Adrenal gland (tissue), 19 donors: ENCODE measurements at regions of chr16 and their contacts with region 1.

Region 1: GRCh38 chr16:70158261-70158939 is 15.2 kb upstream of the CLEC18C start:
- DNase-seq: peak in 2 of 7 donors; percentile 18 to 55
- H3K4me3 ChIP-seq: no peak overlapping the region
- H3K27ac ChIP-seq: no peak overlapping the region
- H3K4me1 ChIP-seq: no peaks in the 10 kb centered on the region
- H3K27me3 ChIP-seq: no peaks in the 10 kb centered on the region
- CTCF ChIP-seq: no peak
- POLR2A ChIP-seq: no peak

Region 2: DNA sequence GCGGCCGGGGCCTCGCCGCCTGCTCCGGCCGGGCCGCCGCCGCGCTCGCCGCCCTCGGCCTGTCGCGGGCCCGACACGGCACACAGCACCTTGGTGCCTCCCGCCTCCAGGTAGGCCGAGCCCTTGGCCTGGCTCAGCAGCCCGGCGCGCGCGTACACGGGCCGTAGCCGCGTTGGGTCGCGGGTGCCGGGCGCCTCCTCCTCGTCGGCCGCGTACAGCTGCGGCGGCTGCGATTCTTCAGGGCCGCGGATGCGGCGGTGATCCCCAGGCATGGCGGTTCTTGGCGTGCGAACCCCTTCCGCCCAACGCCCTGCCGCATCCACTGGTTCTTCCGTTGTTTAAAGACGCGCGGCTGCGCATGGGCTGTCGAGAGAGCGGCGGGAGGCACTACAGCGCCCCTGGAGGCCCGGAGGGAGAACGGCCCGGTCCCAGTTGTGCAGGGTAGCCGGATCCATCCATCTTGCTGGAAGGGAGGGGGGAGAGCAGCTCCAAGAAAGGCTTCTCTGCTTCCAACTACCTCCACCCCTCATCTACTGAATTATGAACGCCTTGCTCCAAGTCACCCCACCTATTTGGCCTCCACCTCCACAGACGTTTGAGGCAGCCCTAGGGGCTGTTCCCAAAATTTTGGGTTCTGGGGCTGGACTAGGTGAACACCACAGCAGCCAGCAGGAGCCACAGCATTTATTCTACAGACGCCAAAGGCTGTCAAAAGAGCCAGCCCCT is 93.4 kb after region 1 on chr16 and contains the start of gene EXOSC6:
- intact Hi-C with region 1: loop called in 1 of 2 experiments (anchors 10 kb)
- DNase-seq: peak; percentile 89 to 94 (median 92)
- H3K4me3 ChIP-seq: peak within 1 kb of the TSS in 2 of 4 donors; percentile 43 to 97
- H3K27ac ChIP-seq: peak within 1 kb of the TSS in 4 of 5 donors; percentile 80 to 99 (median 85)
- H3K4me1 ChIP-seq: peaks cover 12 to 23% of the 10 kb centered on the region in 2 donors
- H3K27me3 ChIP-seq: no peaks in the 10 kb centered on the region
- CTCF ChIP-seq: peak; percentile 87 to 95 (median 92)
- POLR2A ChIP-seq: peak; percentile 77 to 86
- total RNA-seq, gene EXOSC6: 17.3 to 49.6 (median 30.3) TPM

Region 3: DNA sequence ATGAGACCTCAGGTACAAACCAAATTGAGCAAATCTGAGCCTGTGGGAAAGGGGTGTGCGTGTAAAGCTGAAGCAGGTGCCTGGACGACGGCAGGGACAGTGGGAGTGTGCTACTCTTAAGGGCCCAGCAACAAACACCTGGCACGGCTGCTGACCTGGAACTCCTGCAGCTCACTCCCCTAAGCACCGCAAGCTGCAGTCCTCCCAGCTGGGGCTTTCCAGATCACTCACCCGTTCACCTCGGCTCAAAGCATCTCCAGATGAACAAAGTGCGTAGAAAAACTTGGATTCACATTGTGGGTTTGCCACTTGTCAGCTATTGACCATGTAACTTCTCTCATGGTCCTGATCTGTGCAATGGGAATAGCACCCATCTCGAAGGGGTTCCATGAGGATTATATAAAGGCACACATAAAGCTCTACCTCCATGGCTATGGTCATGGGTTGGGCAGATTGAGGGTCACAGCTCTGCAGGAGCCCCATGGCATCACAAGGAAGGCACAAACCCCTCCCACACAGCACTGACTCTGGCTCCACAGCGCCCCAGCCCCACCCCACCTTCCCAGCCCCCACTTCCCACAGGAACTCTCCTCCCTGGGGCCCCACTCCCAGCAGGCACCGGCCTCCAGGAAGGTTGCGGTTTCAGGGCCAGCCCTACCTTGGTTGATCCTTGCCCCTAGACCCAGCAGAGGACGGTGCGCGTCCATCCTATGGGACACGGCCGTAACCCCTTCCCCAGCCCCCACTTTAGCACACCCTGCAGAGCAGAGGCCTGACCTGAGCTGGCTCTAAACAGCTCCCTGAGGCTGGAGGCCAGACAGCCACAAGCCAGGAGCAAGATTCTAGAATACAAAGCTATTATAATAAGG is 258.6 kb after region 1 on chr16:
- intact Hi-C with region 1: no loop called
- DNase-seq: no peak
- H3K4me3 ChIP-seq: no peak overlapping the region
- H3K27ac ChIP-seq: no peak overlapping the region
- H3K4me1 ChIP-seq: peaks cover 0 to 18% of the 10 kb centered on the region in 2 donors
- H3K27me3 ChIP-seq: no peaks in the 10 kb centered on the region
- CTCF ChIP-seq: no peak
- POLR2A ChIP-seq: no peak